CD8-positive, alpha-beta T cell (primary cell): ENCODE measurements at regions of chr4 and their contacts with region 1.

Region 1: GRCh38 chr4:47873877-47874541 is 36.1 kb upstream of the CORIN start:
- DNase-seq: no peak
- ATAC-seq: no peak
- H3K4me3 ChIP-seq: no peak overlapping the region
- H3K4me3 Mint-ChIP-seq: no peak overlapping the region
- H3K27ac ChIP-seq: no peak overlapping the region
- H3K27ac Mint-ChIP-seq: peak overlapping the region; percentile 42
- H3K4me1 ChIP-seq: no peaks in the 10 kb centered on the region
- H3K4me1 Mint-ChIP-seq: peaks cover 3% of the 10 kb centered on the region
- H3K27me3 ChIP-seq: no peaks in the 10 kb centered on the region
- H3K27me3 Mint-ChIP-seq: no peaks in the 10 kb centered on the region
- CTCF ChIP-seq: no peak

Region 2: GRCh38 chr4:47741200-47741599 is 132.8 kb before region 1 on chr4:
- CTCF ChIA-PET with region 1: no interaction called
- POLR2A ChIA-PET with region 1: no interaction called
- intact Hi-C with region 1: no loop called
- DNase-seq: no peak
- ATAC-seq: no peak
- H3K4me3 ChIP-seq: no peak overlapping the region
- H3K4me3 Mint-ChIP-seq: no peak overlapping the region
- H3K27ac ChIP-seq: no peak overlapping the region
- H3K27ac Mint-ChIP-seq: no peak overlapping the region
- H3K4me1 ChIP-seq: no peaks in the 10 kb centered on the region
- H3K4me1 Mint-ChIP-seq: no peaks in the 10 kb centered on the region
- H3K27me3 ChIP-seq: no peaks in the 10 kb centered on the region
- H3K27me3 Mint-ChIP-seq: peaks cover 6% of the 10 kb centered on the region
- CTCF ChIP-seq: no peak

Region 3: DNA sequence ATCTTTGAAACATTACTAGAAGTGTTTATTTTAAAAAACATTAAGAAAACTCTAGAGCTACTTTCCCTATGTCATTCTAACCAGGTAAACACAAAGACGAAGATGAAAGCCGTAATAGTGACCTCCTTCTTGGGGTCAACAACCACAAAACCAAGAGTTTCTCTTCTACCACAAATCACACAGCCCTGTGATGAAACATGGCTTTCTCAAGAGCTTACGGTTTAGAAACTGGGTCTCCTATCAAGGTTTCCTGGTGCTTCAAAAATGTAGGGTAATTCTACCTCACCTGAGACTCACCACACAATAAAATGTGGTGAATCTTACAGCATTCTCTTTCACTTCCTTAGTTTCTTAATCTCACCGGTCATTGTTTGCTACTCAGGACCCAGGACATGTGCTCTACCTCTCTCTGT is 87.0 kb before region 1 on chr4:
- CTCF ChIA-PET with region 1: no interaction called
- POLR2A ChIA-PET with region 1: no interaction called
- intact Hi-C with region 1: no loop called
- DNase-seq: no peak
- ATAC-seq: no peak
- H3K4me3 ChIP-seq: no peak overlapping the region
- H3K4me3 Mint-ChIP-seq: no peak overlapping the region
- H3K27ac ChIP-seq: no peak overlapping the region
- H3K27ac Mint-ChIP-seq: no peak overlapping the region
- H3K4me1 ChIP-seq: no peaks in the 10 kb centered on the region
- H3K4me1 Mint-ChIP-seq: no peaks in the 10 kb centered on the region
- H3K27me3 ChIP-seq: no peaks in the 10 kb centered on the region
- H3K27me3 Mint-ChIP-seq: peaks cover 9% of the 10 kb centered on the region
- CTCF ChIP-seq: no peak

Region 4: DNA sequence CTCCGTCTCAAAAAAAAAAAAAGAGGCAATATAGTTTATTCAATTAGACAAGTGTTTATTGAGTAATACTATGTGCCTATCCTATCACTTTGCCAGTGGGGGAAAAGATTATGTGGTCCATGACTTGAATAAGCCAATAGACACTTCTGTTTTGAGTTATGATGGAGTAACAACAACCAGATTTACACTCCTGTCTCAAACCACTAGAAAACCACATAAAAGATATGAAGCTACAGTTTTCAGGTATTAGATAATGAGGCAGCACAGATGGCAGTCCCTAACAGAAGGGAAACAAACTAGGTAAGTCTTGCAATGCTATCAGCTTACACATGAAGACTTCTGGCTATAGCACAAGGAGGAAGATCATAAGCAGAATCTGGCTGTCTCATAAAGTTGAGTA is 17.9 kb after region 1 on chr4:
- CTCF ChIA-PET with region 1: no interaction called
- POLR2A ChIA-PET with region 1: no interaction called
- intact Hi-C with region 1: loop called in 1 of 2 experiments (anchors 1 kb)
- DNase-seq: no peak
- ATAC-seq: no peak
- H3K4me3 ChIP-seq: no peak overlapping the region
- H3K4me3 Mint-ChIP-seq: no peak overlapping the region
- H3K27ac ChIP-seq: no peak overlapping the region
- H3K27ac Mint-ChIP-seq: no peak overlapping the region
- H3K4me1 ChIP-seq: no peaks in the 10 kb centered on the region
- H3K4me1 Mint-ChIP-seq: peaks cover 11% of the 10 kb centered on the region
- H3K27me3 ChIP-seq: no peaks in the 10 kb centered on the region
- H3K27me3 Mint-ChIP-seq: no peaks in the 10 kb centered on the region
- CTCF ChIP-seq: no peak

Region 5: DNA sequence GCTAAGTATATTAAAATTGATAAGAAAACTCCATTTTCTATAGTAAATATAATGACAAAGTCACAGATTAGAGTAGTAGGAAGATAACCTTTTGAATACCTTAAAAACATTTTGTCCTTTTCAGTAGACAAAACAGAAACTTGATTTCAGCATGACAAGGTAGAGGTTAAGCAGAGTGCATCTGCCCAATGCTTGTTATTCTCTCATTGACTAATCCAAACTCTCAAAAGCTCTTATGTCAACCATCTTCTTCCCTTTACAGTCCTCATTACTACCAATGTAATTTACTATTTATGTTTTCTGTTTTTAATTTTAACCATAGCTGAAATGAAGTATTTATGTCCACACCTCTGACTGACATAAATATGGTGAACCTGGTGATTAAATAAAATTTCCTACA is 153.6 kb after region 1 on chr4:
- CTCF ChIA-PET with region 1: no interaction called
- POLR2A ChIA-PET with region 1: no interaction called
- intact Hi-C with region 1: no loop called
- DNase-seq: no peak
- ATAC-seq: no peak
- H3K4me3 ChIP-seq: no peak overlapping the region
- H3K4me3 Mint-ChIP-seq: no peak overlapping the region
- H3K27ac ChIP-seq: no peak overlapping the region
- H3K27ac Mint-ChIP-seq: no peak overlapping the region
- H3K4me1 ChIP-seq: no peaks in the 10 kb centered on the region
- H3K4me1 Mint-ChIP-seq: no peaks in the 10 kb centered on the region
- H3K27me3 ChIP-seq: peaks cover 0 to 2% of the 10 kb centered on the region in 2 experiments
- H3K27me3 Mint-ChIP-seq: peaks cover 9% of the 10 kb centered on the region
- CTCF ChIP-seq: no peak